HCT116 (cell line): ENCODE measurements at regions of chr6 and their contacts with region 1.

Region 1: GRCh38 chr6:117976030-117976651 is 69.1 kb downstream of the SLC35F1 start:
- DNase-seq: peak; percentile 49
- ATAC-seq: peak; percentile 79
- H3K4me3 ChIP-seq: no peak overlapping the region
- H3K27ac ChIP-seq: no peak overlapping the region
- H3K4me1 ChIP-seq: no peaks in the 10 kb centered on the region
- H3K27me3 ChIP-seq: no peaks in the 10 kb centered on the region
- CTCF ChIP-seq: peak; percentile 48 to 83 (median 68); a peak in 5 of 6 replicates
- POLR2A ChIP-seq: no peak
- RAD21 ChIP-seq: peak; percentile 69

Region 2: GRCh38 chr6:117265410-117266256 is 710.5 kb before region 1 on chr6 and contains the start of gene VGLL2:
- CTCF ChIA-PET with region 1: no interaction called
- POLR2A ChIA-PET with region 1: no interaction called
- RAD21 ChIA-PET with region 1: no interaction called
- intact Hi-C with region 1: no loop called
- DNase-seq: no peak
- ATAC-seq: no peak
- H3K4me3 ChIP-seq: no peak within 1 kb of the TSS
- H3K27ac ChIP-seq: no peak within 1 kb of the TSS
- H3K4me1 ChIP-seq: no peaks in the 10 kb centered on the region
- H3K27me3 ChIP-seq: peaks cover 3% of the 10 kb centered on the region; the same call in 1 of the 2 replicates
- CTCF ChIP-seq: no peak
- POLR2A ChIP-seq: no peak
- RAD21 ChIP-seq: no peak
- total RNA-seq, gene VGLL2: not detected

Region 3: GRCh38 chr6:118263921-118264486 is 287.9 kb after region 1 on chr6:
- CTCF ChIA-PET with region 1: interaction called, 3 read pairs
- POLR2A ChIA-PET with region 1: no interaction called
- RAD21 ChIA-PET with region 1: no interaction called
- intact Hi-C with region 1: loop called (anchors 5 kb)
- DNase-seq: peak; percentile 15
- ATAC-seq: peak; percentile 65
- H3K4me3 ChIP-seq: no peak overlapping the region
- H3K27ac ChIP-seq: no peak overlapping the region
- H3K4me1 ChIP-seq: no peaks in the 10 kb centered on the region
- H3K27me3 ChIP-seq: no peaks in the 10 kb centered on the region
- CTCF ChIP-seq: peak; percentile 16 to 50 (median 43); a peak in 3 of 6 replicates
- POLR2A ChIP-seq: no peak
- RAD21 ChIP-seq: peak; percentile 62

Region 4: GRCh38 chr6:118509009-118509617 is 533.0 kb after region 1 on chr6:
- CTCF ChIA-PET with region 1: interaction called, 3 read pairs
- POLR2A ChIA-PET with region 1: no interaction called
- RAD21 ChIA-PET with region 1: no interaction called
- intact Hi-C with region 1: loop called (anchors 5 kb)
- DNase-seq: peak; percentile 35
- ATAC-seq: peak; percentile 58; the same call in 1 of the 2 replicates
- H3K4me3 ChIP-seq: no peak overlapping the region
- H3K27ac ChIP-seq: no peak overlapping the region
- H3K4me1 ChIP-seq: no peaks in the 10 kb centered on the region
- H3K27me3 ChIP-seq: no peaks in the 10 kb centered on the region
- CTCF ChIP-seq: peak; percentile 73 to 78 (median 76)
- POLR2A ChIP-seq: no peak
- RAD21 ChIP-seq: peak; percentile 83

Region 5: GRCh38 chr6:118551063-118552053 is 575.2 kb after region 1 on chr6:
- CTCF ChIA-PET with region 1: no interaction called
- POLR2A ChIA-PET with region 1: no interaction called
- RAD21 ChIA-PET with region 1: no interaction called
- intact Hi-C with region 1: loop called (anchors 2 kb)
- DNase-seq: peak; percentile 37
- ATAC-seq: peak; percentile 84
- H3K4me3 ChIP-seq: no peak overlapping the region
- H3K27ac ChIP-seq: no peak overlapping the region
- H3K4me1 ChIP-seq: no peaks in the 10 kb centered on the region
- H3K27me3 ChIP-seq: no peaks in the 10 kb centered on the region
- CTCF ChIP-seq: peak; percentile 44 to 64 (median 60); a peak in 4 of 6 replicates
- POLR2A ChIP-seq: no peak
- RAD21 ChIP-seq: peak; percentile 76